Prostate gland (tissue), 2 donors: ENCODE measurements at regions of chr16 and their contacts with region 1.

Region 1: DNA sequence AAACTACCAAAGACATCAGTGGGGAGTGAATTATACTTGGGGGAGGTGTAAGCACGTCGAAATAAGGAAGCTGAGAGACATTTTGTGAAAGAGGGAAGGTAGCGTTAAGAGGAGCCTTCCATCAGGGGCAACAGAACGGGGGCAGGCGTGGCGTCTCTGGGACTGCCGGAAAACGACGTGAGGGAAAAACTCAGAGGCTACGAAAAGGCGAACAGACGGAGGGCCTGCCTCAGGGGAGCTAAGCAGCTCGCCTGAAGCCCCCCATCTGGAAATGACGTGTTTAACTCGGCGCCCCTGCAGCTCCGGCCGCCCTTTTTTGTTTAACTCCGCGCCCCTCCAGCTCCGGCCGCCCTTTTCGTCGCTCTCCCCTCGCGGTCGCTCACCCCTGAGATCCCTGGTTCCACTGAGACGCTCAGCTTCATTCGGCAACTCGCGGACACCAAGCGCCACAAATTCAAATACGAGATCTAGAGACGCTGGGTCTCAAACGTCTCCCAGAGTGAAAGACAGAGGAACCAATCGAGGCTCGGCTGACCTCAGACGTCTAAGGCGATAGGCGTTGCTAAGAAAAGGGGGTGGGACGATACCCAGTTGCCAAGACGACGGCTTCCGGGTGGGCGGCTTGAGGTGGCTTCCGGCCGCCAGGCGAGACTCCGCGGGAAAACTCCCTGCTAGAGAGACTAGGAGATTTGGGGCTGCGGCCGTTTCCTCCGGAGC is 383.3 kb downstream of the ZFHX3 start:
- DNase-seq: peak; percentile 97
- H3K4me3 ChIP-seq: peak overlapping the region; percentile 63 to 69
- H3K27ac ChIP-seq: peak overlapping the region; percentile 59 to 61
- H3K4me1 ChIP-seq: no peaks in the 10 kb centered on the region
- H3K27me3 ChIP-seq: no peaks in the 10 kb centered on the region
- CTCF ChIP-seq: peak in 2 of 4 experiments; percentile 39 to 45
- POLR2A ChIP-seq: peak; percentile 41

Region 2: DNA sequence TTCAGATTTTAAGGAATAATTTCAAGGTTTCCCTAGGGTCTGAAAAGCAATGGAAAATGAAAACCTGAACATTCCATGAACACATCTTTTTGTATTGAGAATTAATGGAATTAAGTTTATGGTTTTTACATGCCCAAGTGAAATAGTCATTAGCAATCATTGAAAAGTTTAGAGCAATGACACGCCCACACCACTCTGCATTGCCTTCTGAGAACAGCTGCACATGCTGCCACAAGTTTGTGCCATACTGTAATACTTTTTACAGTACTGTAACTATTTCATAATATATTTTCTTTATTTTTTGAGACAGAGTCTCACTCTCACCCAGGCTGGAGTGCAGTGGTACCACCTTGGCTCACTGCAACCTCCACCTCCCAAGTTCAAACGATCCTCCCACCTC is 147.5 kb before region 1 on chr16:
- intact Hi-C with region 1: no loop called
- DNase-seq: no peak
- H3K4me3 ChIP-seq: no peak overlapping the region
- H3K27ac ChIP-seq: no peak overlapping the region
- H3K4me1 ChIP-seq: no peaks in the 10 kb centered on the region
- H3K27me3 ChIP-seq: no peaks in the 10 kb centered on the region
- CTCF ChIP-seq: no peak
- POLR2A ChIP-seq: no peak

Region 3: DNA sequence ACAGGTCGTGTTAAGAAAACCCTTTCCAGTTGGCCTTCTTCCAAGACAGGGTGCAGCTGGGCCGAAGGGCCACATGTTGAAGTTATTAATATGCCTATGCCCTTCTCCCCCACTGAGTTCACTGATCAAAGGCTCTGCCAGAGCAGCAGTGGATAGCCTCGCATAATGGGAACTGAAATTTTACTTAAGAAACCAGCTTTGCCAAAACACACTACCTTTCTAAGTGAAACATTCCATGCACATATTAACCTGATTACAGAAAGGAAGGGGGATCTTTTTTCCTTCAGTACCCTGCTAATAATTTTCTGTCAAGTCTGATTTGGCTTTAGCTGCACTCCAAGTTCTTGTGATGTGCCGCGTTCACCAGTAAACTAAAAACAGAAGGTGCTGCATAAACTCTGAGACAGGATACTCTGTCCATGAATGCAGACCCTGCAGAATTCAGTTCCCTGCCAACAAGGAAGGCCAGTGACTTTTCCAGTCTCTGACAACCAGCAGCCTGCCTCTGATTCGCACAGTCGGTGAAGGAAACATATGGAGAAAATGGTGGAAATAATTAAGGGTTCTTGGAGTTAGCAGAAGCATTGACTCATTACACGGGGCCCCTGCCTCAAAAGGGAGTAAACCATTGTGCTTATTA is 99.5 kb after region 1 on chr16:
- intact Hi-C with region 1: no loop called
- DNase-seq: no peak
- H3K4me3 ChIP-seq: no peak overlapping the region
- H3K27ac ChIP-seq: no peak overlapping the region
- H3K4me1 ChIP-seq: no peaks in the 10 kb centered on the region
- H3K27me3 ChIP-seq: no peaks in the 10 kb centered on the region
- CTCF ChIP-seq: no peak
- POLR2A ChIP-seq: no peak

Region 4: GRCh38 chr16:72797621-72798020 is 133.0 kb after region 1 on chr16:
- intact Hi-C with region 1: loop called (anchors 10 kb)
- DNase-seq: no peak
- H3K4me3 ChIP-seq: no peak overlapping the region
- H3K27ac ChIP-seq: no peak overlapping the region
- H3K4me1 ChIP-seq: no peaks in the 10 kb centered on the region
- H3K27me3 ChIP-seq: no peaks in the 10 kb centered on the region
- CTCF ChIP-seq: no peak
- POLR2A ChIP-seq: no peak